Left ventricle myocardium superior (tissue), 1 donor: ENCODE measurements at regions of chr1 and their contacts with region 1.

Region 1: GRCh38 chr1:21368515-21369289 is 71.2 kb upstream of the NBPF3 start:
- DNase-seq: peak; percentile 85
- ATAC-seq: peak; percentile 96

Region 2: DNA sequence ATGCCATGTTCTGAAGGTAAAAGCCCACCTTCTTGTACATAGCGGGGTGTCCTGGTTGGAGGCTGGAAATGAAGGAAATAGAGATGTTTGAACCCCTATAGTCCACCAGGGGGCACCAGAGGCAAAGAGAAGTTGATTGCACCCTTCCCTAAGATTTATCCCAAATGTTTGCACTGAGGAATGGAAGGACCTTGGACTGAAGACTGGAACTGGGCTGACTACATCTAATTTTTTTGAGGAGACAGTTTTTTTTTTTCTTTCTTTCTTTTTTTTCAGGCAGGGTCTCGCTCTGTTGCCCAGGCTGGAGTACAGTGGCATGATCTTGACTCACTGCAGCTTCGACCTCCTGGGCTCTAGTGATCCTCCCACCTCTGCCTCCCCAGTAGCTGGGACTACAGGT is 136.7 kb before region 1 on chr1:
- intact Hi-C with region 1: loop called (anchors 5 kb)
- DNase-seq: no peak
- ATAC-seq: peak; percentile 67

Region 3: GRCh38 chr1:21294266-21294989 is 74.3 kb before region 1 on chr1:
- intact Hi-C with region 1: no loop called
- DNase-seq: no peak
- ATAC-seq: peak; percentile 14